Cardiac septum (tissue), 1 donor: ENCODE measurements at regions of chr9 and their contacts with region 1.

Region 1: DNA sequence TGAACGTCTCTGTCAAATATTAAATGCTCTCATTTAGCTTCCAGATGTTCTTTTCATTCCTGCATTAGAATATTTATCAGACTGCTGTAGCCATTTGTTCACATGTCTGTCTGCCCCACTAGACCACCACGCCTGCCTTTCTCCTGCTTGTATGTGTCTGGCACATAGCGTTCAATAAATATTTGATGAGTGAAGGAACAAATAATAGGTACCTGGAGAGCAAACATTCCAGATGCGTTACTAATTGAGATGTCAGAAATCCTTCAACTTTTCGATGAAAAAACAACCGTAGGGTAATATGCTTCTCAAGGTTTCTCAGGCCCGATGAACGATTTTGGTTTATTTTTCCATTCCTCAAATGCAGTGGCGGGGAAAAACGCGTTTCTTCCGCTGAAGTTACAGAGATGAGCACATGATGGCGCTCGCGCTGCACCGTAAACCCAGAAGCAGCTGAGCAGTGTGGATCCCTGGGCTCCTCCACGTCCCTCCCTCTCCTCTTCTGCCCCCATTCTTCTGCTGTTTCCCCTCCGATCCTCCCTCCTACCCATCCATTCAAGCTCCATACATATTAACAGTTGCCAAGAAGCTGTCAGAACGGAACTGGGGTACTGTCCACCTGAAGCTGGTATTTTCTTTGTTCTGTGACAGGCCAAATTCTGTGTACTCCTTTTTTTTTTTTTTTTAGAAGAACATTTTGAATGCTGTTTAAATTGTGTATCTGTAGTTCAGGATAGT is 245.4 kb downstream of the MPDZ start:
- DNase-seq: no peak

Region 2: GRCh38 chr9:13070612-13071595 is 36.8 kb after region 1 on chr9:
- intact Hi-C with region 1: no loop called
- DNase-seq: no peak

Region 3: GRCh38 chr9:13088720-13089427 is 54.7 kb after region 1 on chr9:
- intact Hi-C with region 1: loop called (anchors 2 kb)
- DNase-seq: no peak